ENCODE measurements at regions of chr2 and their contacts with region 1.

Region 1: DNA sequence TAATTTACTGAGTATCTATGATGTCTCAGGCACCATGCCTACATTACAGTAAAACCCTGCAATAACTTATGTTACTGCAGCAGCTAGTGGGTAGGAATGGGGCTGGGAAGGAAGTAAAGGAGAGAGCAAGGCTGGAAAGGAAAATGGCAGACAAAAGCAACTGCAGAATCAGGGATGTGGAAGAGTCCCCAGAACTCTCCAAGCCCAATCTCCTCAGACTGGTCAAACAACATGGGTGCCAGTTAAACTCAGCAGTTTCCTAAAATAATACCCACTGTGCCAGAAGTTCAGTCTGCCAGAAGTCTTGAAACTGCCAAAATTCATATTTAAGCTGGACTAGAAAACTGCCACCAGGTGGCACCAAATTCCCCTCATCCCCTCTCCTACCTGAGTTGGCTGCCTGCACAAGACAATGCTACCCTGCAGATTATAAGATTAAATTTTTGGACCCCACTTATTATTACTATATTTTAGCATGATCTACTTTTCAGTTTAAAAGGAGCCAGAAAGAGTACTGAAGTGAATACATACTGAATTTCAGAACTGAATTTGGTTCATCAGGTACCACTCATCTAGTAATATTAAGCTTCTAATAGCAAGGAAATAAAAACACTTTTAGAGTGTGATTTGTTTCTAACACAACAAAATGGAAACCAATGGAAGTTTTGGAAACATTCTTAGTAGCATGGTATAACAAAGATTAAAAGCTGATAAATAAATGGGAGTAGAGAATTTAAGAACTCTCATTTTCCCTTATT is 86.8 kb upstream of the DNER start:
- DNase-seq: peak; percentile 88
- H3K4me3 Mint-ChIP-seq: no peak overlapping the region
- H3K27ac Mint-ChIP-seq: no peak overlapping the region
- H3K4me1 Mint-ChIP-seq: no peaks in the 10 kb centered on the region
- H3K27me3 Mint-ChIP-seq: no peaks in the 10 kb centered on the region

Region 2: GRCh38 chr2:229235131-229235914 is 565.9 kb before region 1 on chr2:
- CTCF ChIA-PET with region 1: no interaction called
- intact Hi-C with region 1: no loop called
- DNase-seq: no peak
- H3K4me3 Mint-ChIP-seq: no peak overlapping the region
- H3K27ac Mint-ChIP-seq: no peak overlapping the region
- H3K4me1 Mint-ChIP-seq: no peaks in the 10 kb centered on the region
- H3K27me3 Mint-ChIP-seq: no peaks in the 10 kb centered on the region

Region 3: DNA sequence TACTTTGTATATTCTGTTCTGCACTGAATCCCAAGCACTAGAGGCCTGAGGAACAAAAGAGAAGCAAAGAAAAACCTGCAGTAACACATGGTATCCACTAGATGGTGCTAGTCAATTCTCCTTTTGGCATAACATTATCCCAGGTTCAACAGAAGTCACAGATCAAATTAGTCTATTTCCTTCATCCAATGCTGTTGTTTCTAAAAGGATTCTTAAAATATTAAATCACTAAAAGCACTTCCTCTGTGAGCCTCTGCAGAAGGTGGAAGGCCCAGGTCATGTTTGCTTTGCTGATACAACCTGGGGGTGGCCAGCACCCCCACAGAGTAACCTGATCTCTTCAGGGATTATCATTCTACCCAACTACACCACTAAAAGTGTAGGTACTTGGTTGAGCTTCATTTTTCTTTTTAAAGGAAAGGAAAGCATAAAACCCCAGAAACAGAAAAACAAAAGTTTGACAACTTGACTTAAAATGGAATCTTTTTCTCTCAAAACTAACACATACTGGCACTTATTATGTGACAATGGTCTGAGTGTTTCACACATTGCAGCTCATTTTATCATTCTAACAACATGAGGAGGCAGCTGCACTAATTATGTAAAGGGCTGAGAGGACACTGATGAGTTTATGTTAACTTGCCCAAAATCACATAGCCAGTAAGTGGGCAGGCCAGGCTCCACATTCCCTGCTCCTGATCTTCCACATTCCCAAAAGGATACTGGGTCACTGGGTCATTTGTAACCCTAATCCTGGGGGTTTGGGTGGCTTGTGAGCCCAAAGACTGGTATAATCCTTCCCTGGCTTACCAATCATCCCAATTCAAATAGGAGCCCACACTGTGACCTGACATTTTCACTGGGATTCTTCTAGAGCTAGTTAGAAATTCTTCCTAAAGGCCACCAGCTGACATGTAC is 20.1 kb before region 1 on chr2:
- CTCF ChIA-PET with region 1: interaction called, 11 read pairs
- intact Hi-C with region 1: no loop called
- DNase-seq: no peak
- H3K4me3 Mint-ChIP-seq: no peak overlapping the region
- H3K27ac Mint-ChIP-seq: no peak overlapping the region
- H3K4me1 Mint-ChIP-seq: peaks cover 11% of the 10 kb centered on the region
- H3K27me3 Mint-ChIP-seq: no peaks in the 10 kb centered on the region

Region 4: DNA sequence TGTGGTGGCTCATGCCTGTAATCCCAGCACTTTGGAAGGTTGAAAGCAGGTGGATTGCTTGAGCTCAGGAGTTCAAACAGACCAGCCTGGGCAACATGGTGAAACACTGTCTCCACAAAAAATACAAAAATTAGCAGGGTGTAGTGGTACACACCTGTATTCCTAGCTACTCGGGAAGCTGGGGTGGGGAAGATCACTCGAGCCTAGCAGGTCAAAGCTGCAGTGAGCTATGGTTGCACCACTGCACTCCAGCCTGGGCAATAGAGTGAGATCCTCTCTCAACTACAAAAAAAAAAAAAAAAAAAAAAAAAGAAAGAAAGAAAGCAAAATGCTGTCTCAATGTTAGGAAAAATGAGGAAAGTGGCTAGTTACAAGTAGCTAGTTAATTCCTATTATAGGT is 63.9 kb after region 1 on chr2:
- CTCF ChIA-PET with region 1: interaction called, 12 read pairs
- intact Hi-C with region 1: no loop called
- DNase-seq: no peak
- H3K4me3 Mint-ChIP-seq: no peak overlapping the region
- H3K27ac Mint-ChIP-seq: no peak overlapping the region
- H3K4me1 Mint-ChIP-seq: peaks cover 50% of the 10 kb centered on the region
- H3K27me3 Mint-ChIP-seq: no peaks in the 10 kb centered on the region

Region 5: DNA sequence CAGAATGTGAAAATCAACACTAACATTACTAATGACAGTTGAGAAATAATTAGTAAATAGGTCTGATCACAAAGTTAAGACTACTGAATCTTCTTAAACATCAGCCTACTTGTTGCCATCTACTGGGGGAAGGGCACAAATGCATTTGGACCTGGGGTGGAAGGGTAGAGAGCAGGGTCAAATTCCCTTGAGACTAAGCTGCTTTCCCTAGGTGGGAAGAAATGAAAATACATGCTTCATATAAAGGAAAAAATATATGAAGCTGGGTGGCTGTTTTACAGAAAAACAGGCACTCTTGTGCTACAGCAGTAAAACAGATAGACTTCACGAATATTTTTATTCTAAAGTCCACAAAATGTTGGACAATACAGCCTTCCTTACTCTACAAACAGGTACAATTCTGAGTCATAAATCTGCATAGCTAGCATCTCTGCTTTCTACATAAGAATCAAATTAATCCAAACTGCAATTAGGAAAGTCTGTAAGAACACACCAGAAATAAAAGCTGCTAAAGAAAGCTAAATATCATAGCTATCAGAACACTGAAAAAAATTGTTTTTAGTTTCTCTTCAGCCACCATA is 109.7 kb after region 1 on chr2:
- CTCF ChIA-PET with region 1: interaction called, 43 read pairs
- intact Hi-C with region 1: loop called (anchors 1 kb)
- DNase-seq: peak; percentile 36
- H3K4me3 Mint-ChIP-seq: no peak overlapping the region
- H3K27ac Mint-ChIP-seq: peak overlapping the region; percentile 7
- H3K4me1 Mint-ChIP-seq: peaks cover 53% of the 10 kb centered on the region
- H3K27me3 Mint-ChIP-seq: no peaks in the 10 kb centered on the region

Region 6: GRCh38 chr2:229980431-229981184 is 179.4 kb after region 1 on chr2:
- CTCF ChIA-PET with region 1: no interaction called
- intact Hi-C with region 1: loop called (anchors 5 kb)
- DNase-seq: peak; percentile 43
- H3K4me3 Mint-ChIP-seq: no peak overlapping the region
- H3K27ac Mint-ChIP-seq: peak overlapping the region; percentile 65
- H3K4me1 Mint-ChIP-seq: peaks cover 8% of the 10 kb centered on the region
- H3K27me3 Mint-ChIP-seq: no peaks in the 10 kb centered on the region

Region 7: GRCh38 chr2:230160112-230160660 is 359.0 kb after region 1 on chr2:
- CTCF ChIA-PET with region 1: interaction called, 4 read pairs
- intact Hi-C with region 1: loop called (anchors 1 kb)
- DNase-seq: peak; percentile 66
- H3K4me3 Mint-ChIP-seq: no peak overlapping the region
- H3K27ac Mint-ChIP-seq: no peak overlapping the region
- H3K4me1 Mint-ChIP-seq: peaks cover 3% of the 10 kb centered on the region
- H3K27me3 Mint-ChIP-seq: no peaks in the 10 kb centered on the region

Measured in activated naive CD4-positive, alpha-beta T cell treated with anti-CD3 and anti-CD28 coated beads for 36 hours (primary cell).